ENCODE measurements at regions of chr20 and their contacts with region 1.

Region 1: DNA sequence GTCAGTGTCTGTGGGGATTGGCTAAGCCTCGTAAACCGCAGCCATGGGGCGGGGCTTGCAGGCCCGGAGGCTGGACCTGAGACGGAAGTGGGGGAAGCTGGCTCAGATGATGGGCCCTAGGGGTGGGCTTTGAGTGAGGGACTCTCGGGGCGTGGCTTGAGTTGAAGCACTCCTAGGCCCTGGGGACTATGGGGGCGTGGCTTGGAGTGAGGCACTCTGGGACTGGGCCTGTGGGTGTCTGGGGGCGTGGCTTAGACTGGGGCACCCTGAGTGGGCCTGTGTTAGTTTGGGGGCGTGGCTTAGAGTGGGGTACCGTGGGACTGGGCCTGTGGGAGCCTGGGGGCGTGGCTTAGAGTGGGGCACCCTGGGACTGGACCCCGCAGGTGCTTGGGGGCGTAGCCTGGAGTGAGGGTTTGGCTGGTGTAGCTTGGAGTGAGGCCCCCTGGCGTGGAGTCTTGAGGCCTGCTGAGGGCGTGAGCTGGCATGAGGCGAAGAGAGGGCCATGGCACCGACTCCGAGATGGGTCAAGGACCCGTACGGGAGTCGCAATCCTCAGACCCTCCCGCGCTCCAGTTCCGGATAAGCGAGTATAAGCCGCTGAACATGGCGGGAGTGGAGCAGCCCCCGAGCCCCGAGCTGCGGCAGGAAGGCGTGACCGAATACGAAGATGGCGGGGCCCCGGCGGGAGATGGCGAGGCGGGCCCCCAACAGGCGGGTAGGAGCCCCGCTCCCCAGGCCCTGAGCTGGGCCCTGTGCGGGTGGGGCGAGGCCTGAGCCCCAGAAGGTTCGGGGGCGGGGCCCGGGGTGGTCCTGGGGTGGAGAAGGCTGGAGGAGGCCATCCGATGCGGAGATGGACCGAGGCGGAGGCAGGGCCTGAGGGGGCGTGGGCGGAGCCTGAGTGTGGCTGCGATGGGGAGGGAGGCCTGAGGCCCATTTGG is 6.8 kb downstream of the L3MBTL1 start:
- DNase-seq: peak; percentile 96 to 97
- ATAC-seq: peak; percentile 93 to 94
- H3K4me3 ChIP-seq: peak overlapping the region; percentile 55 to 73 (median 63)
- H3K27ac ChIP-seq: peak overlapping the region; percentile 72 to 83 (median 76)
- H3K4me1 ChIP-seq: peaks cover 6 to 14% of the 10 kb centered on the region in 2 donors
- H3K27me3 ChIP-seq: no peaks in the 10 kb centered on the region
- CTCF ChIP-seq: peak in 1 of 5 experiments; percentile 35
- POLR2A ChIP-seq: peak in 1 of 2 donors; percentile 8

Region 2: DNA sequence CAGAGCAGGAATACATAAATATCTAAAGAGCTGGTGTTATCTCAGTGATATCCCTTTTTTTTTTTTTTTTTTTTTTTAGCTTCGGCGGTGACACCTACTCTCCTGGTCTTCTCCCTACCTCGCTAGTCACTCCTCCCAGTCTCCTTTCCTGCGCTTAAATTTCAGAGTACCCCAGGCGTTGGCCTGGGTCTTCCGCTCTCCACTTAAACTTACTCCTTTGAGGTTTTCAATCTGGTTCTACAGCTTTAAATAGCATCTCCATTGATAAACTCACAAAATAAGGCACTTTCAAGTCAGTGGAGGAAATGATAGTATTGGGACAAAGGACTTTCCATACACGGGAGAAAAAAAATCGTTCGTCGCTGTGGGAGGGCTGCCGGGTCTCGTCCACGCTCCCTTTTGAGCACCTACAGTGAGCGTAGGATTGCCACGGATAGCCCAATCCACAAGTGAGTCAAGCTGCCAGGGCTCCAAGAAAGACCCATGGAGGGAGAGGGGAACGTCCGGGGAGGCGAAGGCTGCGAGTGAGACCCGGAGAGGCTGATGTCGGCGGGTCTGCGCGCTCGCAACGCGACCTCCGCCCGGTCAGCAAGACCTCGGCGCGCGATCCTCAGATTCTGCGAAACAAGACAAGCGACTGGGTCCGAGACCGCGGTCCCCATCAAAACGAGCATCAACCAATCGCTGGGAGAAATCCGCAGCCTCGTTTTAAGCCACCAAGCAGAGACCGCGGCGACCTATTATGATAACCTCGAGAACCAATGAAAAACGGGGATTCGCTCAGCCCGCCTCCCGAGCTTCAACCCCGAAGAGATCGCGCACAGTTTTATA is 57.3 kb before region 1 on chr20:
- in situ Hi-C with region 1: no loop called
- intact Hi-C with region 1: loop called (anchors 2 kb)
- DNase-seq: peak; percentile 89 to 90
- ATAC-seq: peak; percentile 96 to 98
- H3K4me3 ChIP-seq: peak overlapping the region; percentile 88 to 97 (median 96)
- H3K27ac ChIP-seq: peak overlapping the region; percentile 99 to 100 (median 100)
- H3K4me1 ChIP-seq: peaks cover 11 to 25% of the 10 kb centered on the region in 2 donors
- H3K27me3 ChIP-seq: no peaks in the 10 kb centered on the region
- CTCF ChIP-seq: no peak
- POLR2A ChIP-seq: no peak

Region 3: DNA sequence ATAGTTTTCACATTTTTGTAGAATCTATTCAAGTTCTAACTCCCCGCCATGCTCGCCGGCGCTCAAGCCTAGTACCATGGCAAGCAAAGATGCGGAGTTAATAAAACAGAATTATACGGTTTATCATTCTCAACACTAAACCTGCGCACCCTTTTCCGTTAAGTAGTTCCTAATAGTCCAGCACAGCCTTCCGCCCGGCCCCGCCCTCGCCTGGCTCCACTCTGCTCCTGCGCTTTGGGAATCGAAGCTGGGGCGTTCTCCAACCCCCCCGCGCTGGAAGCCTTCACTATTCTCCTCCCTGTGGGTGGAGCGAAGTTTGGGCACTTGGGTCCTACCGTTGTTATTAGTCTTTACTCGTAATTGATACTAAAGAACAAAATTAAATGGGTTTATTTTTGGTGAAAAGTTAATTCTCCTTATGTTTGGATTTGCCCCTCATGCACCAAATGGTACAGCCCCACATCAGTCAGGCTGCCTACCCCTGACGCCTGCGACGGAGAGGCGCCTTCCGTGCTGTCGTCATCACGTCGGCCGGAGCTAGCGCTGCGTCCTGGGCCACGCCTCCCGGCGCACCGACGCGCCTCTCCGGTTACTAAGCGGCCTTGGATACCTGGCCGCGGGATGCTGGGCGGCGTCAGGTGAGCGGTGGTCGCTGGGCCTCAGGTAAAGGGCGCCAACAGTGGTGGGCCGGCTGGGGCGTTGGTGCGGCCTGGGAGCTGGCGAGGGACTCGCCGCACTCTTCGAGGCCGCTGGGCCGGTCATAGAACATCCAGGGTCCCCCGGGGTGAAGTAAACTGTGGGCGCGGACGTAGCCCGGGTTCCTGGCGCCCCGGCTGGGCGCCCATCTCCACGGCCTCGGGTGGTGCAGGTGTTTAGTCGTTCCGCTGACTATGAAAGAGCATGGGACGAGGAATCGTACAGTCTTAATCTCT is 76.3 kb after region 1 on chr20 and contains the start of gene IFT52:
- in situ Hi-C with region 1: no loop called
- intact Hi-C with region 1: loop called (anchors 1 kb)
- DNase-seq: peak; percentile 84 to 88
- ATAC-seq: peak; percentile 99
- H3K4me3 ChIP-seq: peak within 1 kb of the TSS; percentile 92 to 97 (median 96)
- H3K27ac ChIP-seq: peak within 1 kb of the TSS; percentile 78 to 93 (median 86)
- H3K4me1 ChIP-seq: peaks cover 12 to 16% of the 10 kb centered on the region in 2 donors
- H3K27me3 ChIP-seq: no peaks in the 10 kb centered on the region
- CTCF ChIP-seq: no peak
- POLR2A ChIP-seq: peak in 1 of 2 donors; percentile 6
- total RNA-seq, gene IFT52: 1.7 to 3.4 (median 2.9) TPM

Region 4: DNA sequence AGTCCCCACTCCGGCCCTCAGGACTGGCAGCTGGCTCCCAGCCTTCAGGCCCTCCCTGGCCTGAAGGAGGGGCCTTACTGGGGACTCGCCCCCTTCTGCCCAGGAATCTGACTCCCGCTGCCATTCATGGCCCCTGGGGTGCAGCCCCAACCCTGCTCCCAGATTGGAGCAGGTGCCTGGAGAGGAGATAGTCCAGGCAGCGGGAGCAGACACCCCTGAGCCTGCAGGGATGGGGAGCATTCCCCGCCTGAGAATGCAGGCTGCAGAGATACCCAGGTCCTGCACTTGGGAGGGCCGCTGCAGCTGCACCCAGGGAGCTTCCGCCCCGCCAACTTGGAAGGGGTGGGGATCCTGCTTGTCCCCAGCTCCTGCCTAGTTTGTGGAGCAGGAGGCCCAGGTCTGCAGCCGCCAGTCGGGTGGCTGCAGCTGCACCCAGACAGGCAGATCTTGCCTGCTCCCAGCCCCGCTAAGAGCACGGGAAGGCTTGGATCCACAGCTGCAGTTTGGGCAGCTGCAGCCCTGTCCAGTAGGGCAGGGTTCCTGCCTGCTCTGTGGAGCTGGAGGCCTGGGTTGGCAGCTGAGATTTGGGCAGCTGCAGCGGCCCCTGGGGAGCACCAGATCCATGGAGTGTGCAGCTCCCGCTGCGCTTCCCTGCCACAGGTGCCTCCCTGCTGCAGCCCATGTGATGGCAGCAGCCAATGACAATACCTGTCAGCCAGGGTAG is 207.3 kb after region 1 on chr20:
- in situ Hi-C with region 1: no loop called
- intact Hi-C with region 1: no loop called
- DNase-seq: no peak
- ATAC-seq: no peak
- H3K4me3 ChIP-seq: no peak overlapping the region
- H3K27ac ChIP-seq: no peak overlapping the region
- H3K4me1 ChIP-seq: no peaks in the 10 kb centered on the region
- H3K27me3 ChIP-seq: no peaks in the 10 kb centered on the region
- CTCF ChIP-seq: no peak
- POLR2A ChIP-seq: no peak

Measured in gastrocnemius medialis (tissue), 4 donors.